ENCODE measurements at regions of chr3 and their contacts with region 1.

Region 1: DNA sequence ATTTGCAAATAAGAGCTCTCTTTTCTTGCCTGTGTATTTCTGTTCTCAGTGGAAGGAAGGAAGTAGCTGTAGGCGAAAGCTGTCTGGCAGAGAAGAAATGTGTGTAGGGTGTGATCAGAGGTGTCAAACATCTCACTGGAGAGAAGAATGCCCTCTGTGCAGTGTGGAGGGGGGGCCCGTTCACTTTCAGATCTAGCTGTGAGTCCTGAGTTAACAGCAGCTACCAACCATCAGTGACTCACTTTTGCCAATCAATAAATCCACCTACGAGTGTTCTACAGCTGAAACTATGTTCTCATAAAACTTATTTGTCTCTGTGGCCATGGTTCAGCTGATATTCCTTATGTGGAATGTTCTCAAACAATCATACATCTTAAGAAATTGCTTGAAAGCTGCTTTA is 103.7 kb downstream of the FRMD4B start:
- DNase-seq: peak; percentile 74
- H3K4me3 Mint-ChIP-seq: peak overlapping the region; percentile 7
- H3K27ac Mint-ChIP-seq: peak overlapping the region; percentile 34
- H3K4me1 Mint-ChIP-seq: peaks cover 8% of the 10 kb centered on the region
- H3K27me3 Mint-ChIP-seq: no peaks in the 10 kb centered on the region
- CTCF ChIP-seq: no peak

Region 2: DNA sequence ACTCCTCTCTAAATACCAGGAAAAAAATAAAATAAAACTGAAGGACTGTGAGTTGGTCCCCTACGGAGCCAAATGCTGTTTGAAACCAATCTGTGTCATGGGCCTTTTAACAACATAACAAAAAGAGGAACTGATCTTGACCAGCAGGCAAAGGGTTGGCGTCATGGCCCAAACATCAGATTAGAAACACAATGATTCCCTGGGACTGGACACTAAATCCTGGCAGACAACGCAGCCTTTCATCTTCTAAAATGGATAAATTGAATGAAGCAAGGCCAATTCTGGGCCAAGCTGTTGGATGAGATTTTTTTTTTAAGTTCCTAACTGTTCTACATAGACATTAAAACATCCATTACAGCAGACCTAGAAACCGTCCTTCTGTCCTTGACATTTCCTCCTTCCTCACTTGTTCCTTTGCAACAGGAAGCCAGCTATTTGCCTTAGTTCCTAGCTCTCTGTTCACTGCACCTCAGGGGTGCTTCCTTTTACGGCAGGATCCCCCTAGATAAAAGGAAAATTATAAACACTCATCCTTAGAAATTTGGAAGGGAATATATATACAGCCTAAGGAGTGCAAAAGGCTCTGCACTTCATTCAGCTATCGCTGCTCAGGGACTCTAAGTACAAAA is 328.3 kb before region 1 on chr3:
- CTCF ChIA-PET with region 1: no interaction called
- intact Hi-C with region 1: no loop called
- DNase-seq: no peak
- H3K4me3 Mint-ChIP-seq: no peak overlapping the region
- H3K27ac Mint-ChIP-seq: no peak overlapping the region
- H3K4me1 Mint-ChIP-seq: no peaks in the 10 kb centered on the region
- H3K27me3 Mint-ChIP-seq: peaks cover 53% of the 10 kb centered on the region
- CTCF ChIP-seq: no peak

Region 3: GRCh38 chr3:69250014-69250413 is 32.2 kb before region 1 on chr3:
- CTCF ChIA-PET with region 1: interaction called, 7 read pairs
- intact Hi-C with region 1: loop called (anchors 5 kb)
- DNase-seq: peak; percentile 78
- H3K4me3 Mint-ChIP-seq: peak overlapping the region; percentile 83
- H3K27ac Mint-ChIP-seq: peak overlapping the region; percentile 85
- H3K4me1 Mint-ChIP-seq: peaks cover 50% of the 10 kb centered on the region
- H3K27me3 Mint-ChIP-seq: no peaks in the 10 kb centered on the region
- CTCF ChIP-seq: no peak

Region 4: GRCh38 chr3:69671082-69671952 is 389.1 kb after region 1 on chr3:
- CTCF ChIA-PET with region 1: no interaction called
- intact Hi-C with region 1: no loop called
- DNase-seq: peak; percentile 46
- H3K4me3 Mint-ChIP-seq: no peak overlapping the region
- H3K27ac Mint-ChIP-seq: no peak overlapping the region
- H3K4me1 Mint-ChIP-seq: peaks cover 24% of the 10 kb centered on the region
- H3K27me3 Mint-ChIP-seq: no peaks in the 10 kb centered on the region
- CTCF ChIP-seq: peak; percentile 44

Measured in Calu3 (cell line).